Activated B cell treated with CpG ODN at 0.5 μM for 24 hours (primary cell): ENCODE measurements at regions of chr3 and their contacts with region 1.

Region 1: DNA sequence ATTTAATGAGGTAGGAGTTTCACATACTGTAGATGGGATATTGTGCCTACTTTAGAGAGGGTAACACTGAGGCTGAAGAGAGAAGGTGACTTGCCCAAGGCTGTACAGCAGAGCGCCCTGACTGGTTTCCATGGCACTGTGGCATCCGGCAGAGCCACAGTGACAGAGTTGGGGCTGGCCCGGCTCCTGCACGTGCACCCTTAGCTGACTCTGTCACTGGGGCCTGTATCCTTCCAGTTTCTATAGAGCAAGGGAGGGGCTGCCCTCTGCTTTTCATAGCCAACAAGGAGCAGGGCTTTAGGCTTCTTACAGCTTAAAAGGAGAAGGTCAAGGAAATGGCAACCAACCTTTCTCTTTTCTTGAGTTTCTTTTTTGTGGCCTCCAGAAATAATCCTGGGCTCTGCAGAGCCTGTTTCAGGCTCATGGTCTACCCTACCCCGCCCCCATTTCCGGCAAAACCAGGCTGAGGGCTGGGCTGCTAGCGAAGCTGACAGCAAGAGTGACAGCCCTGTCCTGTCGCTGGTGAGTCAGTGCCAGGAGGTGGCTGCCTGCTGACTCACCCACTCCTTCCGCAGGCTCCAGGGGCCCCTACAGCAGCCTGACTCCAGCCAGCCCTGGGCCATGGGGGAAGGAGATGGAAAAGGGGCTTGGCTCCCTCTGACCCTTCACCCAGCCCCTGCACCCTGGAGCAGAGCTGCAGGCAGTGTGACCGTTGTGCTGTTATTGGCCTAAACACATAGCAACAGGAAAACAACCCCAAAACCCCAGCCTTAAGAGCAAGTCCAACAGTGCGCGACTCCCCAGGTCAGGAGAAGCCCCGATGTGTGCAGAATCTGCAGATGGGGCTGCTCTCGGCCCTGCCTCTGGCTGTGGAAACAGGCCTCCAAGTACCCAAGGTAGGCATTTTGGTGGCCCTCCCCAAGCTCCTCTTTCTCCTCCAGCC is 29.8 kb downstream of the SLC6A6 start:
- DNase-seq: peak; percentile 76
- ATAC-seq: peak; percentile 75
- H3K4me3 Mint-ChIP-seq: peak overlapping the region; percentile 72
- H3K27ac Mint-ChIP-seq: peak overlapping the region; percentile 94
- H3K4me1 Mint-ChIP-seq: peaks cover 90% of the 10 kb centered on the region
- H3K27me3 Mint-ChIP-seq: no peaks in the 10 kb centered on the region
- CTCF ChIP-seq: no peak

Region 2: GRCh38 chr3:12556671-12557472 is 1875.3 kb before region 1 on chr3 and contains the start of gene MKRN2:
- CTCF ChIA-PET with region 1: no interaction called
- POLR2A ChIA-PET with region 1: no interaction called
- intact Hi-C with region 1: loop called (anchors 5 kb)
- DNase-seq: peak; percentile 85
- ATAC-seq: peak; percentile 96
- H3K4me3 Mint-ChIP-seq: peak within 1 kb of the TSS; percentile 89
- H3K27ac Mint-ChIP-seq: peak within 1 kb of the TSS; percentile 62
- H3K4me1 Mint-ChIP-seq: peaks cover 62% of the 10 kb centered on the region
- H3K27me3 Mint-ChIP-seq: peaks cover 9% of the 10 kb centered on the region
- CTCF ChIP-seq: no peak
- total RNA-seq, gene MKRN2: 22.2 and 22.3 TPM in 2 replicates

Region 3: GRCh38 chr3:14178247-14179113 is 253.7 kb before region 1 on chr3 and contains the starts of genes LSM3 and XPC:
- CTCF ChIA-PET with region 1: no interaction called
- POLR2A ChIA-PET with region 1: interaction called, 18 read pairs
- intact Hi-C with region 1: loop called (anchors 1 kb)
- DNase-seq: peak; percentile 98
- ATAC-seq: peak; percentile 96
- H3K4me3 Mint-ChIP-seq: peak within 1 kb of the TSS; percentile 97
- H3K27ac Mint-ChIP-seq: peak within 1 kb of the TSS; percentile 98
- H3K4me1 Mint-ChIP-seq: peaks cover 63% of the 10 kb centered on the region
- H3K27me3 Mint-ChIP-seq: no peaks in the 10 kb centered on the region
- CTCF ChIP-seq: no peak
- total RNA-seq, gene LSM3: 12.9 and 14.2 TPM in 2 replicates
- total RNA-seq, gene XPC: 35.4 and 35.6 TPM in 2 replicates

Region 4: DNA sequence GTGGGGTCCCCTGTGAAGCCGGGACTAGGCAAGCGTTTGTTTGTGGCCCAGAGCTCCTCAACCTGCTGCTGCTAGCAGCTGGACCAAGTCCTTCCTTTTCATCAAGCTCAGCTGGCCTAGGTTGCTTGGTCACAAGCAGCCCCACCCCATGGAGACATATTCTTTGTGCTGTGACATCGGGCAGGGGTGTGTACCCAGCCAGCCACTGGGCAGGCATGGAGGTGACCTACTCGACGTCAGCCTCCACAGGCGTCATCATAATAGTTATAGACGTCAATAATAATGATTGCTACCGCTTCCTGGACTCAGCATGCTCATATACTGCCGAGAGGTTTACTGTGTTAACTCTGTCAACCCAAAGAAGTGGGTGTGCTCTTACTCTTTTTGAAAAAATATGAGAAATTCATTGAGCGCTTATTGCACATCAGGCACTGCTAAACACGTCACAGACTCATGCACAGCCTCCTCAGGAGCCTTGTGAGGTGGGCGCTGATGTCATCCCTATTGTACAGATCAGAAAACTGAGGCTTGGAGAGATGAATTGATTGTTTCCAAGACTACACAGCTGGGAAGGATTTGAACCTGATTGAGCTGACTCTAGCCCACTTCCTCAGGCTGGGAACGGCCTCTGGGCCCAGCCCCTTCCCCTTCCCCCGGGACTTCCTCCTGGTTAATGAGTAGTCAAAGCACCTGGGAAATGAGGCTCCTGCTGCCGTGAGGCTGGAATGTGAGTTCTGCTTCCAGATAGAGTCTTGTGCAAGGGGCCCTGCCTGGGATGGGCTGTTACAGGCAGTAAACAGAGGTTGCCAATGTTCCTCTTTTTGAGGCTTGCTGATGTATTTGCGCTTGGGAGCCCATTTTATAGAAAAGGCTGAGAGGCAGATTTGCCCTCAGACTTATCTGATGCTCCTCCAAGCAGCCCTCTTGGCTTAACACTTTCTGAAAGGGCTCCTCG is 13.6 kb before region 1 on chr3:
- CTCF ChIA-PET with region 1: interaction called, 3 read pairs
- POLR2A ChIA-PET with region 1: interaction called, 30 read pairs
- intact Hi-C with region 1: no loop called
- DNase-seq: no peak
- ATAC-seq: no peak
- H3K4me3 Mint-ChIP-seq: no peak overlapping the region
- H3K27ac Mint-ChIP-seq: peak overlapping the region; percentile 41
- H3K4me1 Mint-ChIP-seq: peaks cover 49% of the 10 kb centered on the region
- H3K27me3 Mint-ChIP-seq: no peaks in the 10 kb centered on the region
- CTCF ChIP-seq: no peak

Region 5: GRCh38 chr3:14461748-14462324 is 29.7 kb after region 1 on chr3:
- CTCF ChIA-PET with region 1: interaction called, 11 read pairs
- POLR2A ChIA-PET with region 1: interaction called, 6 read pairs
- intact Hi-C with region 1: loop called (anchors 2 kb)
- DNase-seq: peak; percentile 25
- ATAC-seq: peak; percentile 70
- H3K4me3 Mint-ChIP-seq: no peak overlapping the region
- H3K27ac Mint-ChIP-seq: no peak overlapping the region
- H3K4me1 Mint-ChIP-seq: peaks cover 7% of the 10 kb centered on the region
- H3K27me3 Mint-ChIP-seq: no peaks in the 10 kb centered on the region
- CTCF ChIP-seq: no peak

Region 6: GRCh38 chr3:14651440-14652251 is 219.5 kb after region 1 on chr3 and contains the start of gene CCDC174:
- CTCF ChIA-PET with region 1: no interaction called
- POLR2A ChIA-PET with region 1: interaction called, 14 read pairs
- intact Hi-C with region 1: loop called (anchors 1 kb)
- DNase-seq: peak; percentile 86
- ATAC-seq: peak; percentile 97
- H3K4me3 Mint-ChIP-seq: peak within 1 kb of the TSS; percentile 95
- H3K27ac Mint-ChIP-seq: peak within 1 kb of the TSS; percentile 93
- H3K4me1 Mint-ChIP-seq: peaks cover 34% of the 10 kb centered on the region
- H3K27me3 Mint-ChIP-seq: no peaks in the 10 kb centered on the region
- CTCF ChIP-seq: no peak
- total RNA-seq, gene CCDC174: 30.2 and 32.4 TPM in 2 replicates

Region 7: DNA sequence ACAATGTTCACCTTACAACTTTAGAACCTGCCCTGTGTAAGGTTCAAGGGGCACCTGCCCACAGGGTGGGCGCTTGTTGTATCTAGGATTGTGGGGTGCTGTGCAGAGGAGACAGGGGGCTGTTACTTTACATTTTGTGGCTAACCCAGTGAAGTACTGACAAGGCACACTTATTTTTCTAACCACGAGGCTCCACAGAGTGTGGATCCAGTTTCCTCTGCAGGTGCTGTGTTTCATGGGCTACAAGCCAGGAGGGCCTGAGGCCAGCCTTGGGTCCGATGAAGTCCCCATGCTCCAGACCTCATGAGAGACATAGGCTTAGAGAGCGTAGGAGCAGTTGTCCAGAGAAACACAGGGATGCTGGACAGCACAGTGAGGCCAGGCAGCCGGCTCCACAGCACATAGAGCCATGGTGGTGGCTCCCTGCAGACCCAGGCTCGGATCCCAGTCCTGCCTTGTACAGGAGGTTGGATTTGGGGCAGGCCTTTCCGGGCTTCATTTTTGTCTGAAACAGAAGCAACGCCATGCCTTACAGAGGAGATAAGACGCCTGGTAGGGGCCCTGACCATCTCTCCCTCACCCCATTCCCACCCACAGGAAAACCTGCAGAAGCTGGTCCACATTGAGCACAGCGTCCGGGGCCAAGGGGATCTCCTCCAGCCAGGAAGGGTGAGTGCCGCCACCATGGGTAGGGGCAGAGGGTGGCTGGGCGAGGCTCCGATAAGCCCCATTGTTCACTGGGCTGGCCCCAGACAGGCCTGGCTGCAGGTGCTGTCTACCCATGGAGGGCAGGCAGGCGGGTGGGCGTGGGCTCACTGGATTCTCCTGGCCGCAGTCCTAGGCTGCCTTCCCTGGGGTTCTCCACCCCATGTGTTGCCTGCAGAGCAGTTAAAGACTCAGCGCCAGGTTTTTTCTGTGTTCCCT is 475.1 kb after region 1 on chr3:
- CTCF ChIA-PET with region 1: no interaction called
- POLR2A ChIA-PET with region 1: no interaction called
- intact Hi-C with region 1: no loop called
- DNase-seq: no peak
- ATAC-seq: no peak
- H3K4me3 Mint-ChIP-seq: no peak overlapping the region
- H3K27ac Mint-ChIP-seq: no peak overlapping the region
- H3K4me1 Mint-ChIP-seq: no peaks in the 10 kb centered on the region
- H3K27me3 Mint-ChIP-seq: peaks cover 16% of the 10 kb centered on the region
- CTCF ChIP-seq: no peak